K562 (cell line): ENCODE measurements at regions of chr12 and their contacts with region 1.

Region 1: DNA sequence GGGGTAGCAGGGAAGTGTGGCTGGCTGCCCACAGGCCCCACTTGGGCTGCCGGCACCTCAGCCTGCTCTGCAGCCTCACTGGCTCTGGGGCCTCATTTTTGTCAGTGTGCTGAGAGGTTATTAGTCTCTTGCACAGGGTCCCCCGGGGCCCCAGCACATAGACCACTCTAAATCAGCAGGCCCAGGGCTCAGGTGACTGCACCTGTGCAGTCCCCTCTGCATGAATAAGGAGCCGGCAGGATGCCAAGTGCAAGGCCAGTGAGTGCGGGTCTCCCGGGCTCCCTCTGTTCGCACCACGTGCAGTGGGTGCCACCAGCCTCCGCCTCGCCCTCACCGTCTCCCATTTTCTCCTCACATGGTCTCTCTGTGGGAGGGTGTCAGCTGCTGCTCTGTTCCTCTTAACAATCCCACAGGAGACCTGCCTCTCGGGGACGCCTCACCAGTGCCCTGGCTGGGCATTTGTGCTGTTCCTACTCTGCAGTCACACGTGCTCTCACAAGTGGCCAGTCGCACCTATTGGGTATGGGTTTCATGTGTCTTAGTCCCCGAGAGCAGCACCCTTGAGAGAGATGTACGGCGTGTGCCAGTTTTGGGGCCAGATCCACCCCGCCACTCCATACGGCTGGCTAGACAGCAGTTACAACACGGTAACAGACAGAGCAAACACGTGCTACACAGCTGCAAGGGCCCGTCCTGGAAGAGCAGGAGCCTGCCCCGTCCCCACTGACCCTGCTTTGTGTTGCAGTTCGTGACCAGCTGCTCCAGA is 40.4 kb downstream of the MMAB start:
- DNase-seq: no peak
- ATAC-seq: no peak
- H3K4me3 ChIP-seq: no peak overlapping the region
- H3K27ac ChIP-seq: no peak overlapping the region
- H3K4me1 ChIP-seq: peaks cover 0 to 5% of the 10 kb centered on the region in 2 experiments; a peak in 1 of 5 replicates
- H3K27me3 ChIP-seq: peaks cover 0 to 9% of the 10 kb centered on the region in 2 experiments; a peak in 2 of 5 replicates
- CTCF ChIP-seq: no peak
- EP300 ChIP-seq: no peak
- POLR2A ChIP-seq: no peak
- RAD21 ChIP-seq: no peak

Region 2: GRCh38 chr12:109518820-109519665 is 13.9 kb before region 1 on chr12:
- CTCF ChIA-PET with region 1: no interaction called
- POLR2A ChIA-PET with region 1: interaction called, 11 read pairs
- in situ Hi-C with region 1: no loop called
- intact Hi-C with region 1: no loop called
- DNase-seq: peak; percentile 65 to 79 (median 76)
- ATAC-seq: peak; percentile 92
- H3K4me3 ChIP-seq: no peak overlapping the region
- H3K27ac ChIP-seq: no peak overlapping the region
- H3K4me1 ChIP-seq: no peaks in the 10 kb centered on the region
- H3K27me3 ChIP-seq: no peaks in the 10 kb centered on the region
- CTCF ChIP-seq: peak; percentile 78 to 88 (median 82)
- EP300 ChIP-seq: no peak
- POLR2A ChIP-seq: no peak
- RAD21 ChIP-seq: peak; percentile 43 to 68

Region 3: DNA sequence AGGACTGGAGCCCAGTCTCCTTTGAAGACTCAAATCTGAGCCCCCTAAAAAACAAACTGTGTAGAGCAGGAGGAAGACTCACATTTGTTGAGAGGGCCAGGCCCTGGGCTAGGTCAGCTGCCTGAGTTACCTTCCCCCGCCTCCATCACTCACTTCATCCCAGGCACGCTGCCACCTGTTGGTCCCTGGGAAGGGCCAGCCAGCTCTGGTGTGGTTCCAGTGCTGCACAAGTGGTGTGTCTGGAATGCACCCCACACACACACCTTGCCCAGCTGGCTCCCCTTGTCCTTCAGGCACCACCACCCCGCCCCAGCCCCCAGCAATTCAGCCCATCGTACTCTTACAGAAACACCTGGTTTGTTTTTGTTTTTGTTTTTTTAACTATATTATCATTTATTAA is 49.8 kb after region 1 on chr12:
- CTCF ChIA-PET with region 1: no interaction called
- POLR2A ChIA-PET with region 1: no interaction called
- in situ Hi-C with region 1: no loop called
- intact Hi-C with region 1: no loop called
- DNase-seq: peak in 2 of 4 experiments; percentile 13 to 31
- ATAC-seq: peak; percentile 62; the same call in 2 of the 3 replicates
- H3K4me3 ChIP-seq: no peak overlapping the region
- H3K27ac ChIP-seq: no peak overlapping the region
- H3K4me1 ChIP-seq: peaks cover 0 to 3% of the 10 kb centered on the region in 2 experiments; a peak in 1 of 5 replicates
- H3K27me3 ChIP-seq: no peaks in the 10 kb centered on the region
- CTCF ChIP-seq: 0 out of 6 replicates have a peak, but pooled peaks of 1 of the 3 experiments have one; percentile 4
- EP300 ChIP-seq: no peak
- POLR2A ChIP-seq: no peak
- RAD21 ChIP-seq: no peak

Region 4: GRCh38 chr12:109670731-109671130 is 137.8 kb after region 1 on chr12:
- CTCF ChIA-PET with region 1: no interaction called
- POLR2A ChIA-PET with region 1: no interaction called
- in situ Hi-C with region 1: no loop called
- intact Hi-C with region 1: no loop called
- DNase-seq: peak in 2 of 4 experiments; percentile 8 to 23
- ATAC-seq: peak; percentile 54
- H3K4me3 ChIP-seq: no peak overlapping the region
- H3K27ac ChIP-seq: no peak overlapping the region
- H3K4me1 ChIP-seq: no peaks in the 10 kb centered on the region
- H3K27me3 ChIP-seq: peaks cover 16 to 60% of the 10 kb centered on the region in 2 experiments
- CTCF ChIP-seq: no peak
- EP300 ChIP-seq: no peak
- POLR2A ChIP-seq: no peak
- RAD21 ChIP-seq: no peak